Activated CD4-positive, alpha-beta T cell treated with anti-CD3 and anti-CD28 coated beads for 36 hours (primary cell): ENCODE measurements at regions of chr7 and their contacts with region 1.

Region 1: DNA sequence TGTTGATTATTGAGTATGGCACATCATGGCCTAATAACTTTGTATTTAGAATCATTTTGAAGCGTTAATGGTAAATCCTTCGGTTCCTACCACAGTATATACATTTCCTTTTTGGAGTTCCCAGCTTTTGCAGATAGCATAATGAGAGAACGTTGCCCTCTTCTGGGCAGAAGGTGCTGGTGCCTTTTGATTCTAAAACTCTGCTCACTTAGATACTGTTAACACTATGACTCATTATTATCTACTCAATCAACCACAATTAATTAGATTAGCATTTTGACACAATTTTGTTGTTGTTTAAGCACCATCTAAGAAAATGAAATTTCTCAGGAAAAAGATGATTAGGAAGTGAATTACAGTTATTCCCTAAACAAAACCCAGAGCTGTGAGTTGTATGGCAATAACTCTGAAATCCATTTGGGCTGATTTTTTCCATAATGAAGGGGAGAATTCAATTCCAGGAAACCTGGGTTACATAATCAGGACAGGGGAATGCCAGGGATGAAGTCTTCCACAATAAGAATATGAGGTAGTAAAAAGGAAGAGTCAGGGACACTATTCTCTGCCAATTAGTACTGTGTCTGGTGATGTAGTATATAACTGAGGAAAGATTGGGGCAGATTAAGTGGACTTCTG is 11.5 kb upstream of the DLD start:
- DNase-seq: peak; percentile 51
- ATAC-seq: peak; percentile 71
- H3K4me3 Mint-ChIP-seq: no peak overlapping the region
- H3K27ac Mint-ChIP-seq: no peak overlapping the region
- H3K4me1 Mint-ChIP-seq: peaks cover 28% of the 10 kb centered on the region
- H3K27me3 Mint-ChIP-seq: peaks cover 5% of the 10 kb centered on the region

Region 2: DNA sequence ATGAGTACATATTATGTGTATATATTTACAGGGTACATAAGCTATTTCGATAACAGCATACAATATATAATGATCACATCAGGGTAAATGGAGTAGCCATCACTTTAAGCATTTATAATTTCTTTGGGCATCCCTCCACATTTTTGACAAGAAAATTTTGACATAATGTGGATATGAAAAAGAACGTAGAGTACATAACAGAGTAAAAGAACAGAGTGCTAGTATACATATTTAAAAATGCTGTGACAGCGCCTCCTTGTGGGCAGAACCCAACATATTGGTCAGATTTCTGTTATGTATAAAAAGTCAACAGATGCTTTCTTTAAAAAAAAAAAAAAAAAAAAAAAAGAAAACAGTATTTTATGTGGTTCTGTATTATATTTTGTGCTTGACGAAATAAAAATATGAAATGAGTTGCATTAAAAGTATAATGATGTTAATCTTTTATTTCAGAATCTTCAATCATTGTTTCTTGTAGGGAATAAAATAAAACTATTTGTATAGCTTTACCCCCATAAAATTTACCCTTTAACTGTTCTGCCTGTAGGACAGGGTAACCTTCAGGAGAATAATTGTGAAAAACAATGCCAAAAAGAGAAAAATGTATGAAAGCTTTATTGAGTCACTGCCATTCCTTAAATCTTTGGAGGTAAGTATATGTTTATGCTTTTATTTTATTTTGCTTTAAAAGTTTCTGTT is 729.0 kb before region 1 on chr7:
- CTCF ChIA-PET with region 1: interaction called, 3 read pairs
- POLR2A ChIA-PET with region 1: no interaction called
- intact Hi-C with region 1: loop called in 1 of 2 experiments (anchors 5 kb)
- DNase-seq: peak; percentile 86
- ATAC-seq: peak; percentile 83
- H3K4me3 Mint-ChIP-seq: no peak overlapping the region
- H3K27ac Mint-ChIP-seq: no peak overlapping the region
- H3K4me1 Mint-ChIP-seq: peaks cover 4% of the 10 kb centered on the region
- H3K27me3 Mint-ChIP-seq: no peaks in the 10 kb centered on the region

Region 3: GRCh38 chr7:107563775-107564552 is 315.6 kb before region 1 on chr7 and contains the starts of genes COG5 and DUS4L:
- CTCF ChIA-PET with region 1: no interaction called
- POLR2A ChIA-PET with region 1: no interaction called
- intact Hi-C with region 1: loop called in 1 of 2 experiments (anchors 5 kb)
- DNase-seq: peak; percentile 92
- ATAC-seq: peak; percentile 88
- H3K4me3 Mint-ChIP-seq: peak within 1 kb of the TSS; percentile 85
- H3K27ac Mint-ChIP-seq: peak within 1 kb of the TSS; percentile 94
- H3K4me1 Mint-ChIP-seq: peaks cover 62% of the 10 kb centered on the region
- H3K27me3 Mint-ChIP-seq: no peaks in the 10 kb centered on the region
- total RNA-seq, gene COG5: 34.1 to 35.5 TPM
- total RNA-seq, gene DUS4L: 12.8 to 13.3 TPM

Region 4: GRCh38 chr7:107725151-107725740 is 154.3 kb before region 1 on chr7:
- CTCF ChIA-PET with region 1: interaction called, 7 read pairs
- POLR2A ChIA-PET with region 1: no interaction called
- intact Hi-C with region 1: loop called in 1 of 2 experiments (anchors 1 kb)
- DNase-seq: peak; percentile 67
- ATAC-seq: peak; percentile 51
- H3K4me3 Mint-ChIP-seq: no peak overlapping the region
- H3K27ac Mint-ChIP-seq: no peak overlapping the region
- H3K4me1 Mint-ChIP-seq: no peaks in the 10 kb centered on the region
- H3K27me3 Mint-ChIP-seq: peaks cover 20% of the 10 kb centered on the region

Region 5: DNA sequence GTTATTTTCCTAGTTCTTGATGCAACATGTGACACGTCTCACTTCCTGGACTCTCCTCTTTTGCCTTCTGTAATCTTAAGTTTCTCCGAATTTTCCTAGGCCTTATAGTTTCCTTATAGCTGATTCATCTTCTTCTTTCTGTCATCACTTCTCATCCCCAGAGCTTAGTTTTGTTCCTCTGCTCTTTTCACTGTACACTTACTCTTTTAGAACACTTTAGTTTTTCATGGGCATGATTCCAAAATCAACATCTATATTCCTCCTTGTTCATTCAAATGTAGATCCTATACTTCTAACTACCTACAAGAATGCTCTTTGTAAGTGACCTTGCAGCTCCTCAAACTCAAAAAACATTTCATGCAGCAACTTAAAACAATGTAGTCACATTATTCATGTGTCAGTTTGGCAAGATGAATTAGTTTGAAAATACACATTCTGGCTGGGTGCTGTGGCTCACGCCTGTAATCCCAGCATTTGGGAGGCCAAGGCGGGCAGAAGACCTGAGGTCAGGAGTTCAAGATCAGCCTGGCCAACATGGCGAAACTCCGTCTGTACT is 63.4 kb before region 1 on chr7:
- CTCF ChIA-PET with region 1: interaction called, 4 read pairs
- POLR2A ChIA-PET with region 1: interaction called, 3 read pairs
- intact Hi-C with region 1: loop called (anchors 2 kb)
- DNase-seq: no peak
- ATAC-seq: no peak
- H3K4me3 Mint-ChIP-seq: no peak overlapping the region
- H3K27ac Mint-ChIP-seq: peak overlapping the region; percentile 81
- H3K4me1 Mint-ChIP-seq: peaks cover 35% of the 10 kb centered on the region
- H3K27me3 Mint-ChIP-seq: no peaks in the 10 kb centered on the region